ENCODE measurements at regions of chr2 and their contacts with region 1.

Region 1: GRCh38 chr2:232588680-232589585 is 38.4 kb downstream of the EIF4E2 start:
- DNase-seq: peak; percentile 94
- ATAC-seq: peak; percentile 75
- H3K4me3 ChIP-seq: no peak overlapping the region; the same call in 1 of the 2 replicates
- H3K27ac ChIP-seq: peak overlapping the region; percentile 85
- H3K4me1 ChIP-seq: peaks cover 40% of the 10 kb centered on the region
- H3K27me3 ChIP-seq: no peaks in the 10 kb centered on the region
- CTCF ChIP-seq: no peak

Region 2: DNA sequence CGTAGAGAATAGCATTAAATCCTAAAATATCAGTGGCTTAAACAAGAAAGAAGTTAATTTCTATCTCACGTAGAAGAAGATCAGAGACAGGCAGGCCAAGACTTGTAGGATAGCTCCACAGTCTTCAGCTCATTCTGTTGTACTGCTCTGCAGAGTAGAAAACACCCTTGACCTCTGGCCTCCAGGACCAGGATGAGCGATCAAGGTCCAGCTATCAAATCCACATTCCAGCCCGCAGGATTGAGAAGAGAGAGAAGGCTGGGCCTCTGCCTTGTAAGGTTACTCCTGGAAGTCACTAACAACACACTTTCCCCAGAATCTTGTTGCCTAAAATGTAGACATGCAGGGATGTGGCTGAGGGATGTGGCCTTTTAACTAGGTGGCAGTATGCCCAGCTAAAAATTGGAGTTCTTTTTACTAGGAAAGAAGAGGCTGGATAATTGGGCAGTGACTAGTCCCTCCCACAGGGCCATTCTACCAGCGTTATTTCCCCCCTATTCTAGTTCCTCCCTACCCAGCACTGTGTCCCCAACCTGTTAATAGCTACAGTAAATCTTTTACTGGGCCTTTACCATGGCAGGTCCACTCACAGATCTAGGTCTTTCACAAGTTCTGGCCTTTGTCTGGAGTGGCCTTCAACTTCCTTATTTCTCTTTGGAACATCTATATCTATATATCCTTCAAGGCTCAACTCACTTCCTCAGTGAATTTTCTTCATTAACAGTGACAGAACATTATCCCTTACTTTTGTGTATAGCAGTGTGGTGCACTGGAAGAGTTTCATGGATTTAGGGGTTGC is 462.4 kb before region 1 on chr2:
- CTCF ChIA-PET with region 1: no interaction called
- POLR2A ChIA-PET with region 1: no interaction called
- intact Hi-C with region 1: no loop called
- DNase-seq: no peak
- ATAC-seq: no peak
- H3K4me3 ChIP-seq: no peak overlapping the region
- H3K27ac ChIP-seq: no peak overlapping the region
- H3K4me1 ChIP-seq: no peaks in the 10 kb centered on the region
- H3K27me3 ChIP-seq: no peaks in the 10 kb centered on the region
- CTCF ChIP-seq: no peak

Region 3: GRCh38 chr2:232432598-232433184 is 156.2 kb before region 1 on chr2:
- CTCF ChIA-PET with region 1: no interaction called
- POLR2A ChIA-PET with region 1: no interaction called
- intact Hi-C with region 1: no loop called
- DNase-seq: peak; percentile 13
- ATAC-seq: peak; percentile 42; the same call in 1 of the 2 replicates
- H3K4me3 ChIP-seq: no peak overlapping the region
- H3K27ac ChIP-seq: no peak overlapping the region
- H3K4me1 ChIP-seq: no peaks in the 10 kb centered on the region
- H3K27me3 ChIP-seq: no peaks in the 10 kb centered on the region
- CTCF ChIP-seq: no peak; the same call in 1 of the 2 replicates

Region 4: GRCh38 chr2:232568161-232568560 is 20.8 kb before region 1 on chr2:
- CTCF ChIA-PET with region 1: no interaction called
- POLR2A ChIA-PET with region 1: interaction called, 4 read pairs
- intact Hi-C with region 1: loop called (anchors 1 kb)
- DNase-seq: peak; percentile 83
- ATAC-seq: peak; percentile 99
- H3K4me3 ChIP-seq: no peak overlapping the region
- H3K27ac ChIP-seq: peak overlapping the region; percentile 87
- H3K4me1 ChIP-seq: peaks cover 16% of the 10 kb centered on the region
- H3K27me3 ChIP-seq: no peaks in the 10 kb centered on the region
- CTCF ChIP-seq: no peak

Measured in PC-3 (cell line).